ENCODE measurements at regions of chr3 and their contacts with region 1.

Region 1: DNA sequence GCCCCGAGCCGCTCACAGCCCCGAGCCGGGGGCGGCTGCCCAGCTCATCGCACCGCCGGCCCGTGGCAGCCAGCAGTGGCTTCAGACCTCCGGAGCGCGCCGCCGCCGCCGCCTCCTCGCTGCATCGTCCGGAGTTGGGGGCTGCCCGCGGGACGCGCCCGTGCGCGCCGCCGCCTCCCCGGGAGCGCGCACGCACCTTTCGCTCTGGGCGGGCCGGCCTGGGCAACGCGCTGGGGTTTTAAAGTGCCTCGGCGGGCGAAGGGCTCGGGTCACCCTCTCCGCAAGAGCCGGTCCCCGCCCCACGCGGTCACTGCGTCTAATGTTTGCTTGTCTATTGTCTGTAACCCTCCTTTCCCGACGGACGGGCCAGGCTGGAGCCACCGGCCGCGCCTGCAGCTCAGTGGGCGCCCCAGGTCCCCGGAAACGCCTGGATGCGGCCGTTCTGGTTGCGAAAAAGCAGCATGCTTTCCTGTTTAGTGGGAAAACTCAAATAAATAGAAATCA is at the start of gene RYK:
- DNase-seq: peak; percentile 59 to 83 (median 78)
- H3K4me3 ChIP-seq: peak within 1 kb of the TSS; percentile 83
- H3K4me3 Mint-ChIP-seq: peak within 1 kb of the TSS; percentile 91 to 99 (median 95)
- H3K27ac ChIP-seq: peak within 1 kb of the TSS; percentile 64
- H3K27ac Mint-ChIP-seq: peak within 1 kb of the TSS; percentile 88 to 98 (median 96)
- H3K4me1 ChIP-seq: peaks cover 28% of the 10 kb centered on the region
- H3K4me1 Mint-ChIP-seq: peaks cover 42 to 57% (median 55%) of the 10 kb centered on the region in 3 donors
- H3K27me3 ChIP-seq: no peaks in the 10 kb centered on the region
- H3K27me3 Mint-ChIP-seq: no peaks in the 10 kb centered on the region
- total RNA-seq, gene RYK: 23.0 to 26.1 TPM

Region 2: GRCh38 chr3:134485718-134486576 is 235.2 kb after region 1 on chr3 and contains the starts of genes ANAPC13 and CEP63:
- CTCF ChIA-PET with region 1: no interaction called
- POLR2A ChIA-PET with region 1: interaction called, 19 read pairs
- DNase-seq: peak; percentile 87 to 97 (median 95)
- H3K4me3 ChIP-seq: peak within 1 kb of the TSS; percentile 99
- H3K4me3 Mint-ChIP-seq: peak within 1 kb of the TSS; percentile 93 to 100 (median 97)
- H3K27ac ChIP-seq: peak within 1 kb of the TSS; percentile 88
- H3K27ac Mint-ChIP-seq: peak within 1 kb of the TSS; percentile 97 to 100 (median 98)
- H3K4me1 ChIP-seq: peaks cover 33% of the 10 kb centered on the region
- H3K4me1 Mint-ChIP-seq: peaks cover 44 to 65% (median 56%) of the 10 kb centered on the region in 3 donors
- H3K27me3 ChIP-seq: no peaks in the 10 kb centered on the region
- H3K27me3 Mint-ChIP-seq: peaks cover 0 to 2% of the 10 kb centered on the region in 2 donors
- total RNA-seq, gene ANAPC13: 41.0 to 42.0 TPM
- total RNA-seq, gene CEP63: 21.1 to 21.3 TPM

Measured in CD8-positive, alpha-beta memory T cell (primary cell).